Activated T-helper 2 cell treated with anti-CD3 and anti-CD28 coated beads, Interferon-gamma antibody, Interleukin-2, Interleukin-4, amounts not matched to agents 10 μg/mL and 5 μg/mL and 100 μg/mL, durations not matched to agents 14 hours and 24 hours and 36 hours (primary cell): ENCODE measurements at regions of chr1 and their contacts with region 1.

Region 1: DNA sequence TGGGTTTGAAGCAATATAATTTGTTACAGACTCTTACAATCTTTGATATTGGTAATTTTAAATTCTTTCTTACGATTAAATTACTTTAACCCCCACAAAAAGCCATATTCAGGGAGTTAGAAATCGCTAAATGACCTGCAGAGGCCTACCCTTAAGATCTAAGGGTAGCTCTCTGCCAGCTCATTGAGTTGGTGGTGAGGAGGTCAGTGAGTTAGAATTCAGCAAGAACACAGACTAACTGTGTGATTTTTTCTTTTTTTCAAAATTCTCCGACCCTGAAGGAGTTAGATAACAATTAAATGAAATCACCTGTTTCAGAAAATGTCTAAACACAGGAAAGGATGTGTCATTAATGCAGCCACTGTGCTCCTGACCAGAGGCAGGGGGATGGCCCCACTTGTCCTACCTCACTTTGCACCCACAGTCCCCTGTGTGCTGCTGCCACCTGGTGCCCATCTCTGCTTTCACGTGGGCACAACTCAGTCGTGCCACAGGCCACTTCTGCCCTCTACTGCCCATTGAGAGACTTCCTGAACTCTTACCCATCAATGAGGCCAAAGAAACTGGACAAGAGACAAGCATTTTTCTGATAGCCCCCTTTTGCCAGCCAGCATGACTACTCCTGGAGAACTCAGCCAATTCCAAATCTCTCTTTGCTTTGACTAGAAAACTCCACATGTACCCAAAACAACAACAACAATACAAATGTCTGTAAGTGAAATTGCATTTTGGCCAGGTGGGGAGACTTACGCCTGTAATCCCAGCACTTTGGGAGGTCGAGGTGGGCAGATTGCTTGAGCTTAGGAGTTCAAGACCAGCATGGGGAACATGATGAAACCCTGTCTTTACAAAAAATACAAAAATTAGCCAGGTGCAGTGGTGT is 8.4 kb downstream of the CFAP45 start:
- DNase-seq: peak; percentile 47
- H3K4me3 Mint-ChIP-seq: no peak overlapping the region
- H3K27ac Mint-ChIP-seq: no peak overlapping the region
- H3K4me1 Mint-ChIP-seq: peaks cover 11% of the 10 kb centered on the region
- H3K27me3 Mint-ChIP-seq: peaks cover 15% of the 10 kb centered on the region

Region 2: DNA sequence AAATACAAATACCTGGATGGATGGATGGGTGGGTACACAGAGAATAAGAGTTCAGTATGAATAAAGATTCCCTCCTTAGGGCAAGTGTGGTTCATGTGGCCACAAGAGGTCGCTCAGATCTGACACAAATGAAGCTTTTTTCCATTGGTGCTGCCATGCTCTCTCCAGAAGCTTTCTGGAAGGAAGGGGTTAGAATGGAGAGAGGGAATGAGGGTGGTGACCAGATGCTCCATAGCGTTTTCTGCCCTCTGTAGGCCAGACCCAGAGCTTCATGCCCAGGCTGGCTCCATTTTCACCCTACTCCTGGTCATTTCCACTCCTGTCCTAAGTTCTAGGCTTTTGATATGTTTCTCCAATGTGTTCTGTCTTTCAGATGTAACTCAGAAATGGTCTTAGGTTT is 92.6 kb before region 1 on chr1:
- intact Hi-C with region 1: loop called (anchors 1 kb)
- DNase-seq: no peak
- H3K4me3 Mint-ChIP-seq: no peak overlapping the region
- H3K27ac Mint-ChIP-seq: no peak overlapping the region
- H3K4me1 Mint-ChIP-seq: peaks cover 11% of the 10 kb centered on the region
- H3K27me3 Mint-ChIP-seq: peaks cover 44% of the 10 kb centered on the region

Region 3: GRCh38 chr1:159829273-159829634 is 62.3 kb before region 1 on chr1:
- intact Hi-C with region 1: loop called (anchors 2 kb)
- DNase-seq: no peak
- H3K4me3 Mint-ChIP-seq: no peak overlapping the region
- H3K27ac Mint-ChIP-seq: no peak overlapping the region
- H3K4me1 Mint-ChIP-seq: peaks cover 38% of the 10 kb centered on the region
- H3K27me3 Mint-ChIP-seq: peaks cover 6% of the 10 kb centered on the region

Region 4: GRCh38 chr1:159854693-159855192 is 36.8 kb before region 1 on chr1:
- intact Hi-C with region 1: loop called (anchors 5 kb)
- DNase-seq: peak; percentile 69
- H3K4me3 Mint-ChIP-seq: peak overlapping the region; percentile 85
- H3K27ac Mint-ChIP-seq: peak overlapping the region; percentile 62
- H3K4me1 Mint-ChIP-seq: peaks cover 15% of the 10 kb centered on the region
- H3K27me3 Mint-ChIP-seq: peaks cover 19% of the 10 kb centered on the region

Region 5: GRCh38 chr1:159945483-159946241 is 54.1 kb after region 1 on chr1 and contains the start of gene IGSF9:
- intact Hi-C with region 1: no loop called
- DNase-seq: peak; percentile 35
- H3K4me3 Mint-ChIP-seq: peak within 1 kb of the TSS; percentile 18
- H3K27ac Mint-ChIP-seq: no peak within 1 kb of the TSS
- H3K4me1 Mint-ChIP-seq: peaks cover 2% of the 10 kb centered on the region
- H3K27me3 Mint-ChIP-seq: peaks cover 61% of the 10 kb centered on the region
- total RNA-seq, gene IGSF9: not detected in 2 replicates

Region 6: GRCh38 chr1:160293020-160293968 is 401.8 kb after region 1 on chr1:
- intact Hi-C with region 1: no loop called
- DNase-seq: no peak
- H3K4me3 Mint-ChIP-seq: no peak overlapping the region
- H3K27ac Mint-ChIP-seq: no peak overlapping the region
- H3K4me1 Mint-ChIP-seq: no peaks in the 10 kb centered on the region
- H3K27me3 Mint-ChIP-seq: no peaks in the 10 kb centered on the region